Dorsolateral prefrontal cortex (tissue), 120 donors: ENCODE measurements at regions of chr10 and their contacts with region 1.

Region 1: DNA sequence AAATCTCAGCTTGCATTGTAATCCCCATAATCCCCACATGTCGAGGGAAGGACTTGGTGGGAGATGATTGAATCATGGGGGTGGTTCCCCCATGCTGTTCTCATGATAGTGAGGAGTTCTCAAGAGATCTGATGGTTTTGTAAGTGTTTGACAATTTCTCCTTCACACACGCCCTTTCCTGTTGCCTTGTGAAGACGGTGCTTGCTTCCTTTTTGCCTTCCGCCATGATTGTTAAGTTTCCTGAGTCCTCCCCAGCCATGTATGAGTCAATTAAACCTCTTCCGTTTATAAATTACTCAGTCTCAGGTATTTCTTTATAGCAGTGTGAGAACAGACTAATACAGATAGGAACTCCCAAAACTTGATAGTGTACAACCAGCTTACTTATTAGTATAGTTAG is 98.6 kb downstream of the CREM start:
- DNase-seq: no peak
- H3K4me3 ChIP-seq: no peak overlapping the region
- H3K27ac ChIP-seq: no peak overlapping the region
- H3K27me3 ChIP-seq: no peaks in the 10 kb centered on the region
- CTCF ChIP-seq: no peak

Region 2: GRCh38 chr10:35355971-35356724 is 130.9 kb after region 1 on chr10:
- intact Hi-C with region 1: no loop called
- DNase-seq: no peak
- H3K4me3 ChIP-seq: peak overlapping the region in 1 of 59 donors; percentile 4
- H3K27ac ChIP-seq: peak overlapping the region in 41 of 59 donors; percentile 1 to 60 (median 28)
- H3K27me3 ChIP-seq: no peaks in the 10 kb centered on the region
- CTCF ChIP-seq: no peak

Region 3: GRCh38 chr10:36789974-36790373 is 1564.8 kb after region 1 on chr10:
- intact Hi-C with region 1: loop called in 1 of 2 experiments (anchors 10 kb)
- DNase-seq: no peak
- H3K4me3 ChIP-seq: no peak overlapping the region
- H3K27ac ChIP-seq: no peak overlapping the region
- H3K27me3 ChIP-seq: no peaks in the 10 kb centered on the region
- CTCF ChIP-seq: no peak